BJ (cell line): ENCODE measurements at regions of chr10 and their contacts with region 1.

Region 1: GRCh38 chr10:86671985-86672710 is 3.8 kb downstream of the LDB3 start:
- DNase-seq: no peak
- H3K4me3 ChIP-seq: no peak overlapping the region
- H3K27me3 ChIP-seq: peaks cover 2% of the 10 kb centered on the region; the same call in 1 of the 2 replicates
- CTCF ChIP-seq: no peak

Region 2: GRCh38 chr10:85557077-85557476 is 1115.1 kb before region 1 on chr10:
- CTCF ChIA-PET with region 1: no interaction called
- POLR2A ChIA-PET with region 1: no interaction called
- DNase-seq: no peak
- H3K4me3 ChIP-seq: no peak overlapping the region
- H3K27me3 ChIP-seq: no peaks in the 10 kb centered on the region
- CTCF ChIP-seq: no peak

Region 3: DNA sequence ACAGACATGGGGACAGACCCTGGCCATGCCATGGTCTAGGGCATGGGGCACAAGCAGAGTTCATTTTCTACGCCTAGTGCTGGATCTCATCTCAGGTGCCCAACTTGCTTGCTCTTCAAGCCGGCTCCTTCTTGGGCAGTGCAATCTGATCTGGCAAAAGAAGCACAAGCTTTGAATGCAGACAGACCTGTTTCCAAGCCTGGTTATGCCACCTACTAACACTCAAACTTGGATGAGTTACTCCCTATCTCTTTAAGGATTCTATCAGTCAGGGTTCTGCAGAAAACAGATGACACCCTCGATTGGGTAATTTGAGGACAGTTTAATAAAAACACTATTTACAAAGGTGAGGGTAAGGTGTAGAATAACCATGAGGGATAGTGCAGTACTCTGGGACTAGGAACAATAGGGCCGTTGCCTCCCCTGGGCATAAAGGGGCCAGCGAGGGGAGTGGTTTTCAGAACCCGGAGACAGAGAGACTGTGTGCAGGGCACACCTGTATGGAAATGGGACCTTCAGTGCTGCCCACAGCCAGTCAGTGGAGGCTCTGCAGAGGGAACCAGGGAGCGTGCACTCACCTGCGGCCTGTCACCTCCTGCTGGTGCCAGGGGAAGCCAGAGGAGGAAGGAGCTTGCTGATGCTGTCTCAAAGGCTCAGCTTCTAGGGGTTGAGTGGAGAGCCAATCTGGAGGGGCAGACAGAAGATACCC is 115.4 kb before region 1 on chr10:
- CTCF ChIA-PET with region 1: no interaction called
- POLR2A ChIA-PET with region 1: no interaction called
- DNase-seq: no peak
- H3K4me3 ChIP-seq: no peak overlapping the region
- H3K27me3 ChIP-seq: no peaks in the 10 kb centered on the region
- CTCF ChIP-seq: no peak

Region 4: DNA sequence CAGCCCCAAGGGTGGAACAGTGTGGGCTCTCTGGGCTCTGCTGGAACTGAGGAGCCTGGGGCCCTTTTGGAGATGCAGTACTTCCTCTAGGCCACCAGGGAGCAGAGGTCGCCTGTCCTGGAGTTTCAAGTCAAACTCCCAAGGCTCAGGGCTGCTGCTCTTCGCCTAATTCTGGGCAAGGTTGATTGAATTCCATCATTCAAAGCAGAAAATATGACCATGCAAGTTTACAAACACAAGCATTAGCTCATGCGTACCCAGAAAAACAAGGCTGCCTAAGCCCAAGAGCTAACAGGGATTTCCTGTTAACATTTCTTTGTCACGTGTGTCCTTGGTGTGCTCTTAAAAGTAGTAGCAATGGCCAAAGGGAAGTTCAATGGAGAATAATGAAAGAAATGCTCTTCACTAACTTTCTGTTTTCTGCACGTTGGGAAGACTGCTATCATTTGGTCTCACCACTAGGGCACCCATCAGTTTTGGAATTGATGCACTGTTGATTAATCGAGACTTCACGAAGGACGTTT is 16.3 kb after region 1 on chr10:
- CTCF ChIA-PET with region 1: interaction called, 11 read pairs
- POLR2A ChIA-PET with region 1: no interaction called
- DNase-seq: no peak
- H3K4me3 ChIP-seq: no peak overlapping the region
- H3K27me3 ChIP-seq: no peaks in the 10 kb centered on the region
- CTCF ChIP-seq: peak; percentile 87